ENCODE measurements at regions of chr1 and their contacts with region 1.

Region 1: DNA sequence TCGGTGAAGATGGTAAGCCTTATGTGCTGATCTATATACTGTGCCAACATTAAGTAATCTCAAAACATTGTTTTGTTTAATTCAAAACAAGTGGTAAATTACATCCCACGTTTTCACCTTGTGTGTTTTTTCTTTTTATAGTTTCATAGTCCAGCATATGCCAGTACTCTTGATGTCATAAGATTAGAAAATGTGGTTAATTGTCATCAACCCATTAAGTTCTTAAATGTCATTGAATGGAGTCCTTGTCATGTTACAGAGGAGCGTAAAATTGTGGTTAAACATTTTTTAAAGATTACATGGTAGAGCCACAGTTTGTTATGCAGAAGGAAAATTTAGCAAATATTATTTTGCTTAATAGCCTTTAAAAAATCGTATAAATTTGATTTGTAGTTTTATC is 93.1 kb downstream of the FNBP1L start:
- DNase-seq: no peak
- H3K4me3 Mint-ChIP-seq: no peak overlapping the region
- H3K27ac Mint-ChIP-seq: no peak overlapping the region
- H3K4me1 Mint-ChIP-seq: no peaks in the 10 kb centered on the region
- H3K27me3 Mint-ChIP-seq: no peaks in the 10 kb centered on the region
- CTCF ChIP-seq: no peak

Region 2: DNA sequence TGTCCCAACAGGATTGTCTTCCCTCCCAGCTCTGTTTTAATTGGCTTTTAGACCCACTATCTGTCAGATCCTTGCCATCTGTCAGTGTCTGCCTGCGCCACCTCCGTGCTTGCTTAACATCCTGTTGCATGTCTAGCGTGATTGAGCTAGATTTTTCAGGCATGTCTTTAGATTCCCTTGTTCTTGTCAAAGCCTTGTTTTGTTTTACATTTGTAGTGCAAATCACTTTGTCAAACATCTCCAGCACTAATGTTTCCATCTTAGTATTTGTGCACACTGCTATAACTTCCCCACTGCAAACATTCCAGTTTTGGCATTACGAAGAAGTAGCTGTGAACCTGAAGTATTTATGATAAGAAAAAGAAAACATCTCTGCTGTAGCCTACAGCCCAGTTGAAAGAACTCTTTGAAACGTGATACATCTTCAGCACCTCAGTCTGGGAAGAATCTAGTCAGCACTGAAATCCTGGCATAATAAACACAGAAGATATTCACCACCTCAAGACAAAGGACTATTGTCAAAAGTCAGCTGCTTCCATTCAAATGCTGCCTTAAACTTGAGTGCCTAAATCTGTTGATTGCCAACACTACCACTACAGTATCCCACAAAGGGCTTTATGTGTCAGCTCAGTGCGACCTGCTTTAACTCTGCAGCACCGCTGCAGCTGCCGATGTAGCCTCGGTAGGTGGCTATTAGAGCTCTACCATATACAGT is 11.9 kb after region 1 on chr1:
- CTCF ChIA-PET with region 1: interaction called, 3 read pairs
- POLR2A ChIA-PET with region 1: interaction called, 16 read pairs
- intact Hi-C with region 1: no loop called
- DNase-seq: peak; percentile 80
- H3K4me3 Mint-ChIP-seq: peak overlapping the region; percentile 32
- H3K27ac Mint-ChIP-seq: peak overlapping the region; percentile 62
- H3K4me1 Mint-ChIP-seq: peaks cover 50% of the 10 kb centered on the region
- H3K27me3 Mint-ChIP-seq: no peaks in the 10 kb centered on the region
- CTCF ChIP-seq: no peak

Region 3: GRCh38 chr1:93672069-93672468 is 131.0 kb after region 1 on chr1:
- CTCF ChIA-PET with region 1: no interaction called
- POLR2A ChIA-PET with region 1: no interaction called
- intact Hi-C with region 1: no loop called
- DNase-seq: peak; percentile 89
- H3K4me3 Mint-ChIP-seq: no peak overlapping the region
- H3K27ac Mint-ChIP-seq: peak overlapping the region; percentile 42
- H3K4me1 Mint-ChIP-seq: peaks cover 63% of the 10 kb centered on the region
- H3K27me3 Mint-ChIP-seq: no peaks in the 10 kb centered on the region
- CTCF ChIP-seq: no peak

Measured in MCF 10A (cell line).